GM10248 (cell line): ENCODE measurements at regions of chr12 and their contacts with region 1.

Region 1: DNA sequence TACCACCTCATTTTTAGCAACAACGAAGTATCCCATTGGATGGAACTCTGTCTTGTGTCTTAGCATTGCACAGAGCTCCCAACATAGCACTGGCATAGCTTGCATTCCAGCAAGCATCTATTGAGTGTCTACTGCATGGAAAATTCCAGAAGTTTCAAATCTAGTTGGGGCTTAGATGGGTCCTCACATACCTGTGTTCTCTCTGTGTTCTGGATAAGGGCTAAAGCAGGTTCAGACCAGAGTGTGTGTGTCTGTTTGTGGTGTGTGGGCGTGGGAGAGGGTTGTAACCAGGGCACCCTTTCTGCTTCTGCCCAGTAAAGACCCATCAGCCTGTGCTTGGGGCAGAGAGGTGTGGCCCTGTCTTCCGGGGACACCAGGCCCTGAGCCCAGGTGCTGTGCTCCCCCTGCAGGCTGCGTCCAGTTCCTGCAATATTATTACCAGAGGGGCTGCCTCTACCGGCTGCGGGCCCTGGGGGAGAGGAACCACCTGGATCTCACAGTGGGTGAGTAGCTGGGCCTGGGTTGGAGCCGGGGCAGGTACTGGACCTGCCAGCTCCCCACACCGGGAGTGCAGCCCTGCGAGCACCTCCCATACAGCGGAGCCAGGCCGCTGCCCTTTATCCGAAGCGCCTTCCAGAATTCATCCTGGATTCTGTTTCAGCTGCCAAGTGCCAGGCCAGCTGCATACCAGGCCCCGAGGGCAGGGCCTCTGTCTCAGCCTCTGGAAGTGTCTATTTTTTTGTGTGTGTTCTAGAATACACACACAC is 20.3 kb downstream of the RHOF start:
- DNase-seq: peak; percentile 93
- CTCF ChIP-seq: peak; percentile 92

Region 2: DNA sequence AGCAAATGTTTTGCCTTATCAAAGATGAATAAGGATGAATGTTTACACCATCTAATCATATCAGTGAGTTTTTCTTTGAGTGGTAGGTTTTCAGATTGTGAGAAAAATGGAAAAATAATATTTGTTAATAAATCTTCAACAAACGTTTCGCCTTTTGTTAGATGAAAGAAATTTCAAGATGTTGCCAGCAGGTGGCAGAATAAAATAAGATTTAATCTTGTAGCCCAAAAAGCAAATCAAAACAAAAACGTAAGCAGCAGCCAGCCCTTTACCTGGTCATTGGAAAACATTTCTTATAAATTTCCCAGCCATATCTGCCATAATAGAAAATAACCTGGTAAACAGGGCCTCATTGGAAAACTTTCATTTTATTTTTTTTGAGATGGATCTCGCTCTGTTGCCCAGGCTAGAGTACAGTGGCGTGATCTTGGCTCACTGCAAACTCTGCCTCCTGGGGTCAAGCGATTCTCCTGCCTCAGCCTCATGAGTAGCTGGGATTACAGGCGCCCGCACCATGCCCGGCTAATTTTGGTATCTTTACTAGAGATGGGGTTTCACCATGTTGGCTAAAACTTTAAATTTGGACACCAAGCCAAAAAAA is 76.0 kb before region 1 on chr12:
- CTCF ChIA-PET with region 1: interaction called, 67 read pairs
- POLR2A ChIA-PET with region 1: no interaction called
- DNase-seq: peak; percentile 69
- CTCF ChIP-seq: peak; percentile 44

Region 3: DNA sequence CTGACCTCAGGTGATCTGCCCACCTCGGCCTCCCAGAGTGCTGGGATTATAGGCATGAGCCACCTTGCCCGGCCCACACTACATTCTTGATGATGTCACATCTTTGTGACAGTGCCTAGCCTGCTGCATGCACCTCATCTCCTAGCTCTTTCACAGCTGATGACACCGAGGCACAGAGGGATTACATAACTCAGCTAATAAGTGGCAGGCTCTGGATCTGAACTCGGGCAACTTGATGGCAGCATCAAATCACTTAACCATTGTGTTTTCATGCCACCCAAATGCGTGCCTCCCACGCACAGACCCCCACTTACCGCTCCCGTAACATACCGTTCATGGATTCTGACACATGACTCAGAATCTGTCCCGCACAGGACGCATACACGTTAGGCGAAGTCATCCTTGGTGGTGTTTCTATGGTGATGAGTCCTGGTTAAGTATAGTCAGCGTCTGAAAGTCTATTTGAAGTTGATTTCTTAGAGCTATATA is 53.2 kb before region 1 on chr12:
- CTCF ChIA-PET with region 1: interaction called, 11 read pairs
- POLR2A ChIA-PET with region 1: no interaction called
- DNase-seq: no peak
- CTCF ChIP-seq: no peak

Region 4: GRCh38 chr12:121786441-121786825 is 13.2 kb after region 1 on chr12:
- CTCF ChIA-PET with region 1: interaction called, 533 read pairs
- POLR2A ChIA-PET with region 1: no interaction called
- DNase-seq: no peak
- CTCF ChIP-seq: no peak